ENCODE measurements at regions of chr12 and their contacts with region 1.

Region 1: DNA sequence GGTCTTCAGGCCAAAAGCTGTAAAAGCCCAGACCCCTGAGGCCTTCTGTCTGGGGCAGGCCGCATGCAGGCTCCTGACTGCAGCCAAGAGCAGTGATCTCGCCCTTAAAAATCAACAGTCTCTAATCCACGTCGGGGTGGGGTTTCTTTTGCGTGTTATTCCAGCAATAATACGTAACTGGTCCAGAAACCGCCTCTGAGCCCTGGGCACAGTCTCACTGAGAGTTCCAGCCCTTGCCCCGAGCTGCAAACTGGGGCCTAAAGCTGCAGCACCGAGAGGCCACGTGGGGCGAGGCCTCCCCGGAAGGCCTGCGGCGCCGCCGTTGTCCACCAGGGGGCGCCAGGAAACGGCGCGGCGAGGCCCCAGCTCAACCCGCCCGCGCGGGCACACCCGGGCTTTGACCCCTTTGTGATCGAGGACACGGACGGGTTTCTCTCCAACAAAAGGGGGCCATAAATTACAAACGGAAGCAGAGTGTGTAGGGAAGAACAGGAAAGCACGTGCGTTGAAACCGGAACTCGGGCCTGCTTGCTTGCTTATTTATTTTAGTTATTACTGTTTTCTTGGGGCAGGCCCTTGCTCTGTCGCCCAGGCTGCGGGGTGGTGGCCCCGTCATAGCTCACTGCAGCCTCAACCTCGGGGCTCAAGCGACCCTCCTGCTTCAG is 87.2 kb downstream of the NINJ2 start:
- DNase-seq: peak; percentile 71 to 89 (median 82)
- H3K4me3 ChIP-seq: peak overlapping the region in 1 of 2 donors; percentile 38
- H3K4me3 Mint-ChIP-seq: peak overlapping the region in 7 of 8 donors; percentile 12 to 74 (median 68)
- H3K27ac ChIP-seq: no peak overlapping the region
- H3K27ac Mint-ChIP-seq: peak overlapping the region in 6 of 7 donors; percentile 65 to 92 (median 79)
- H3K4me1 ChIP-seq: peaks cover 15% of the 10 kb centered on the region
- H3K4me1 Mint-ChIP-seq: peaks cover 6 to 23% (median 14%) of the 10 kb centered on the region in 4 donors
- H3K27me3 ChIP-seq: no peaks in the 10 kb centered on the region
- H3K27me3 Mint-ChIP-seq: no peaks in the 10 kb centered on the region

Region 2: DNA sequence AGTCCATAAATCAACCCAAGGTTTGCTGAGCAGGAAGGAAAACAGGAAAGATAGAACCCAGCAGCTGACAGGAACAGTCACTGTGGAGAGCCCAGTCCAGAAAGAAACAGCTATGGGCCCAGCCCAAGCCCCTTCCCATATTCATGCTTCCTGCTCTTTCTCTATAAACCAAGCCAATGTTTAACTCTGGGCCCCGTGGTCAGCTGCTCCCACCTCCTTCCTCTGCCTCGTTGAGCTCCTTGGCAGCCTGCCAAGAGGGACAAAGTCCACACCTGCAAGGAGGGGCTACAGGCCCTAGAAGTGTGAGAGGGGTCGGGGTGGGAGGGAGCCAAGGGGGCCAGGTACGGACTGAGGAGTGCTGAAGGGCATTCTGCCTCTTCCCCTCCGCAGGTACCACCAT is 323.4 kb before region 1 on chr12:
- CTCF ChIA-PET with region 1: no interaction called
- POLR2A ChIA-PET with region 1: no interaction called
- intact Hi-C with region 1: no loop called
- DNase-seq: no peak
- H3K4me3 ChIP-seq: no peak overlapping the region
- H3K4me3 Mint-ChIP-seq: no peak overlapping the region
- H3K27ac ChIP-seq: no peak overlapping the region
- H3K27ac Mint-ChIP-seq: no peak overlapping the region
- H3K4me1 ChIP-seq: no peaks in the 10 kb centered on the region
- H3K4me1 Mint-ChIP-seq: no peaks in the 10 kb centered on the region
- H3K27me3 ChIP-seq: no peaks in the 10 kb centered on the region
- H3K27me3 Mint-ChIP-seq: peaks cover 16 to 36% of the 10 kb centered on the region in 2 donors

Region 3: DNA sequence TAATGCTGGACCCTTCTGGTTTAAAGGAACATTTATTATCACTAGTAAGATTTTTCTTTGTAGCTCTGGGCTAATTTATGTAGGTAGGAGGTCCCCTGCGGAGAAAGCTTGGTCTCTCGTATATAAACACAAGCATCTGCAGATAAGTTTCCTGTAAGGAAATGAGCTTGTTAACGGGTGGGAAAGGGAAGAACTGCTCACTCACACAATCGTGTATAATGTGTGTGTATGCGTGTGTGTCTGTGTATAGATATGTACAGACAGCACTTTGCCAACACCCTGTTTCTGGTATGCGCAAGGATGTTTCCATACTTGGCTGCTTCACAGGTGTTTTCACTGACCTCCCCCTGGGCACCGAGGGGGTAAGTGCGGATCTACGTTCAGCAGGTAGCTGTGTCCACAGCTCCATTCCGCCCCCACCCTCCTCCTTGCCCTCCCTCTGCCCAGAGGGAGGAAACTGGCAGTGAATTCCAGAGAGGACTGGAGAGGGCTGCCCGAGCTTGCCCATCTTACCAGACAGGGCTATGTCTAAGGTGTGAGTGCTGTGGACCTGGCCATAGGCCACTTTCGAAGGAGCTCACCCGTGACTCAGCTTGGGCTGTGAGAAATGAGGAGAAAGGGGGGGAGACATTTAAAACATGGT is 22.0 kb after region 1 on chr12:
- CTCF ChIA-PET with region 1: interaction called, 15 read pairs
- POLR2A ChIA-PET with region 1: no interaction called
- intact Hi-C with region 1: no loop called
- DNase-seq: no peak
- H3K4me3 ChIP-seq: no peak overlapping the region
- H3K4me3 Mint-ChIP-seq: no peak overlapping the region
- H3K27ac ChIP-seq: no peak overlapping the region
- H3K27ac Mint-ChIP-seq: no peak overlapping the region
- H3K4me1 ChIP-seq: no peaks in the 10 kb centered on the region
- H3K4me1 Mint-ChIP-seq: no peaks in the 10 kb centered on the region
- H3K27me3 ChIP-seq: no peaks in the 10 kb centered on the region
- H3K27me3 Mint-ChIP-seq: no peaks in the 10 kb centered on the region

Region 4: DNA sequence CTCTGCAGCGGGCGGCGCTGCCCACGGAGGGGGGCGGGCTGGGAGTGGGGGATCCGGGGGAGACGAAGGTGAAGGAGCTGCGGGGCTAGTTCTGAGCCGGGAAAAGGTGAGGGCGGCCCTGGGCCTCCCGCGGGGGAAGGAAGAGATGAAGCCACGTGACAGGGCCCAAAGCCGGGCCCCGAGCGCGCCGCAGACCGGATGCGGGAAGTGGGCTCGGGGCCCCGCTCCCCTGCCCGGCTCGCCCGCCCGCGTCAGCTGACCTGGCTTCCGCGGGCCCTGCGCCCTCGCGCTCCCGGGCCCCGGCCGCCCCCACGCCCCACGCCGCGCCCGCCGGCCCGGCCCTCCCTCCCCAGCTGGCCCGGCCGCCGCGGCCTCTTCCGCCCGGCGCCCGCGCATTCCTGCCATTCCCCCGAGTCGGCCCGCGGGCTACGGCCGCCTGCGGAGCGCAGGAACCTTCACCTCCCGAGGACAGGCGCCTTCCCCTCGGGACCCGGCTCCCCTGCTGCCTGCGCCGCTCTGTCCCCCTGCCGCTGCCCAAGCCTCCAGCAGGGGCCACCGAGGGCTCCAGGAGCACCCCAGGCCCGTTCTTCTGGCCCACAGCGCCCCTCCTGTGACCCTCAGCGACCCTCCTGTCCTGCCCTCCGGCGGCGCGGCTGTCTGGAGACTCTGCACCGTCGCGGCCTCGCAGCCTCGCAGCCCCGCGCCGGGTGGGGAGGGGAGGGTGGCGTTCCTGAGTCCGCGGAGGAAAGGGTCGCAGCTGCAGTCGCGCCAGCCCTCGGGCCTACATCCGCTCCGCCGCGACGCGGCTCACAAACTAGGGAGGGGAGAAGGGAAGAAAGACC is 66.8 kb after region 1 on chr12:
- CTCF ChIA-PET with region 1: interaction called, 5 read pairs
- POLR2A ChIA-PET with region 1: interaction called, 13 read pairs
- intact Hi-C with region 1: loop called (anchors 1 kb)
- DNase-seq: peak; percentile 79 to 85 (median 83)
- H3K4me3 ChIP-seq: peak overlapping the region; percentile 25 to 76
- H3K4me3 Mint-ChIP-seq: peak overlapping the region; percentile 90 to 94 (median 91)
- H3K27ac ChIP-seq: peak overlapping the region; percentile 89
- H3K27ac Mint-ChIP-seq: peak overlapping the region; percentile 93 to 99 (median 96)
- H3K4me1 ChIP-seq: peaks cover 63% of the 10 kb centered on the region
- H3K4me1 Mint-ChIP-seq: peaks cover 39 to 71% (median 59%) of the 10 kb centered on the region in 4 donors
- H3K27me3 ChIP-seq: no peaks in the 10 kb centered on the region
- H3K27me3 Mint-ChIP-seq: no peaks in the 10 kb centered on the region

Region 5: GRCh38 chr12:685388-685787 is 109.3 kb after region 1 on chr12:
- CTCF ChIA-PET with region 1: interaction called, 6 read pairs
- POLR2A ChIA-PET with region 1: no interaction called
- intact Hi-C with region 1: loop called (anchors 1 kb)
- DNase-seq: peak; percentile 90 to 97 (median 92)
- H3K4me3 ChIP-seq: no peak overlapping the region
- H3K4me3 Mint-ChIP-seq: peak overlapping the region in 7 of 8 donors; percentile 53 to 81 (median 73)
- H3K27ac ChIP-seq: peak overlapping the region; percentile 81
- H3K27ac Mint-ChIP-seq: peak overlapping the region; percentile 90 to 100 (median 99)
- H3K4me1 ChIP-seq: peaks cover 33% of the 10 kb centered on the region
- H3K4me1 Mint-ChIP-seq: peaks cover 32 to 43% (median 35%) of the 10 kb centered on the region in 4 donors
- H3K27me3 ChIP-seq: no peaks in the 10 kb centered on the region
- H3K27me3 Mint-ChIP-seq: no peaks in the 10 kb centered on the region

Region 6: GRCh38 chr12:823028-823698 is 247.1 kb after region 1 on chr12:
- CTCF ChIA-PET with region 1: interaction called, 219 read pairs
- POLR2A ChIA-PET with region 1: no interaction called
- intact Hi-C with region 1: no loop called
- DNase-seq: no peak
- H3K4me3 ChIP-seq: no peak overlapping the region
- H3K4me3 Mint-ChIP-seq: peak overlapping the region in 3 of 8 donors; percentile 6 to 65 (median 64)
- H3K27ac ChIP-seq: no peak overlapping the region
- H3K27ac Mint-ChIP-seq: peak overlapping the region in 4 of 7 donors; percentile 8 to 62 (median 44)
- H3K4me1 ChIP-seq: peaks cover 64% of the 10 kb centered on the region
- H3K4me1 Mint-ChIP-seq: peaks cover 31 to 65% (median 48%) of the 10 kb centered on the region in 4 donors
- H3K27me3 ChIP-seq: no peaks in the 10 kb centered on the region
- H3K27me3 Mint-ChIP-seq: no peaks in the 10 kb centered on the region

Region 7: GRCh38 chr12:879641-880040 is 303.6 kb after region 1 on chr12:
- CTCF ChIA-PET with region 1: no interaction called
- POLR2A ChIA-PET with region 1: no interaction called
- intact Hi-C with region 1: no loop called
- DNase-seq: no peak
- H3K4me3 ChIP-seq: no peak overlapping the region
- H3K4me3 Mint-ChIP-seq: no peak overlapping the region
- H3K27ac ChIP-seq: no peak overlapping the region
- H3K27ac Mint-ChIP-seq: peak overlapping the region in 2 of 7 donors; percentile 50 to 72
- H3K4me1 ChIP-seq: no peaks in the 10 kb centered on the region
- H3K4me1 Mint-ChIP-seq: peaks cover 0 to 3% (median 0%) of the 10 kb centered on the region in 4 donors
- H3K27me3 ChIP-seq: no peaks in the 10 kb centered on the region
- H3K27me3 Mint-ChIP-seq: no peaks in the 10 kb centered on the region